ENCODE measurements at regions of chr13 and their contacts with region 1.

Region 1: DNA sequence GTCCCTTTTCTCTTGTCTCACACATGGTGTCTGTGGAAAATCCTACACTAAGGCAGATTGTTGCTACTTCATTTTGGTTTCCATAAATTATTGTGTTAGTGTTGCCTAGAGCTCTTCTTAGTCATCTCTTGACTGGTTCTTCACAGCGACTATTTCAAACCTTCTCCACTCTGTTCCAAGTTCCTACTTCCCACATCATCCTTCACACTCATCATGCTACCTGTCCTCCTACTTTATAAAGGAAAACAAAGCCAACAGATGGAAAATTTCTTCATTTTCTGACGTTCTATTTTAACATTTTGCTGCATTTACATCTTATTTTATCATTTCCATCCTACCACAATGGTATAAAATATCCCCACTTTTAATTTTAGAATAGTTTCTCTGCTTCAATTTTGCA is 614.1 kb downstream of the LMO7 start:
- DNase-seq: no peak

Region 2: DNA sequence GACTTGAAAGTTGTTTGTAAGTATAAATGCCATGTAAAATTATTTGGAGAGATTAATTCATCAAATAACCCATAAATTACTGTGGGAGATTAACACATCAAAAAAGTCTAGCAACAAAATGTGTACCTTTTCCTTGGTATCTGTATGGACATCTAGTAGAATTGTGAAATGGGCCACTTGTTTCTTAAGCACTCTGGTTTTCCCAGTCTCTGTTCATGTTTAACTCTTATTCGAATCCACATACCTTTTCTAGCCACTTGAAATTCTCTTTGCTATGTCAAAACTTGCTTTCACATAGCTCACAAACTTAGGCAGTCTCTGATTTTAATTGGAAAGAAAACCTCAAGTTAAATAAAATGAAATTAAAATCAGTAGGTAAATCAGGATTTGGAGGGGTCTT is 143.4 kb before region 1 on chr13:
- intact Hi-C with region 1: loop called (anchors 5 kb)
- DNase-seq: no peak

Region 3: GRCh38 chr13:76225815-76226489 is 24.3 kb before region 1 on chr13:
- intact Hi-C with region 1: no loop called
- DNase-seq: no peak